ENCODE measurements at regions of chr1 and their contacts with region 1.

Region 1: GRCh38 chr1:228275739-228276421 is 68.0 kb downstream of the OBSCN start:
- DNase-seq: peak; percentile 75
- H3K4me3 ChIP-seq: peak overlapping the region; percentile 40 to 62 (median 49)
- H3K27ac ChIP-seq: peak overlapping the region; percentile 21
- H3K4me1 ChIP-seq: peaks cover 7% of the 10 kb centered on the region
- H3K27me3 ChIP-seq: no peaks in the 10 kb centered on the region
- CTCF ChIP-seq: no peak
- POLR2A ChIP-seq: no peak

Region 2: DNA sequence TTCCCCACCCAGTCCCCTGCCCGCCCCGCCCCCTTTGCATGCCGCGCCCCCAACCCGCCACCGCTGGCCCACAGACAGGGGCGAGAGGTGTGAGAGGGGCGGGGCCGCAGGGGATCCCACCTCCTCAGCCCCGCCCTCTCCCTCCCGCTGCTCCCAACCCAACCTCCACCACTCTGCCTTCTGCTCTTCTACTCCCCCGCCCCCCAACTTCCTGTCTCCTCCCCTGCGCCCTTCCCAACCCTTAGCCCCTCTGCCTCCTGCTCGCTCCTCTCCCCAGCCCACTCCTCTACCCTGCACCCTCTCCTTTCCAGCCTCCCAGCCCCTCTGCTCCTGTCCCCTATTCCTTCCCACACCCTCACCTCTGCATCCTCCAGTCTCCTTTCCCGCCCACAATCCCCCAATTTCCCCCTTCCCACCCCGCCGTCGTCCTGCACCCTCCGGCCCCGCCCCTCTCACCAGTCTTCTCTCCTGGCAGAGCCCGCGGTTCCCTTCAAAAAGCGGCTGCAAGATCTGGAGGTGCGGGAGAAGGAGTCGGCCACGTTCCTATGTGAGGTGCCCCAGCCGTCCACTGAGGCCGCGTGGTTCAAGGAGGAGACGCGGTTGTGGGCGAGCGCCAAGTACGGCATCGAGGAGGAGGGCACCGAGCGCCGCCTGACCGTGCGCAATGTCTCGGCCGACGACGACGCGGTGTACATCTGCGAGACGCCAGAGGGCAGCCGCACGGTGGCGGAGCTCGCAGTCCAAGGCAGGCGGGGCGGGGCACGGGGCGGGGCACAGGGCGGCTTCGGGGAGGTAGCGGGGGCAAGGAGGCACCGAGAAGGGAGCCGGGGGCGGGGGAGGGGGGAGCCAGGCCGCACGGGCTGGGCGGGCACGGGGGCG is 62.7 kb before region 1 on chr1:
- CTCF ChIA-PET with region 1: interaction called, 5 read pairs
- POLR2A ChIA-PET with region 1: no interaction called
- dilution Hi-C with region 1: no loop called
- intact Hi-C with region 1: loop called (anchors 2 kb)
- DNase-seq: peak; percentile 63
- H3K4me3 ChIP-seq: peak overlapping the region in 1 of 3 experiments; percentile 26
- H3K27ac ChIP-seq: no peak overlapping the region
- H3K4me1 ChIP-seq: no peaks in the 10 kb centered on the region
- H3K27me3 ChIP-seq: peaks cover 4 to 16% of the 10 kb centered on the region in 2 experiments
- CTCF ChIP-seq: peak; percentile 33 to 73
- POLR2A ChIP-seq: no peak

Region 3: DNA sequence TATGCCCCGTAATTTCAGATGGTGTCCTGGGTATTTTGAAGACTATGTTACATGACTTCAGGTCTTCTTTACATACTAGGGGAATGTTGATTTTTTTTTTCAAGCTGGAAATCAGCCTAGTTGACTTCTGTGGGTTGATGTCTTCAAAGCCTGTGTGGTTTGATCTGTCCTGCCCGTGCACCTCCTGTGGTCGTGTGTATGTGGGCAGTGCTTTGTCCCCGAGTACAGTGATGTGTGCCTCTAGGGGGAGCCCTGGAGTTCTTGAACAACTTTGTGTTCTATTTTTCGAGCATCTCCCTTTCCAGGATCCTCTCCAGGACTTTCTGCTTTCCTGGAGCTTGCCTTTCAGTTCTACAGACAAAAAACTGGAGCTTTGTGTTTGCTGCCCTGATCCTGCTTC is 39.1 kb before region 1 on chr1:
- CTCF ChIA-PET with region 1: no interaction called
- POLR2A ChIA-PET with region 1: no interaction called
- dilution Hi-C with region 1: no loop called
- intact Hi-C with region 1: loop called (anchors 5 kb)
- DNase-seq: peak; percentile 62
- H3K4me3 ChIP-seq: no peak overlapping the region
- H3K27ac ChIP-seq: no peak overlapping the region
- H3K4me1 ChIP-seq: no peaks in the 10 kb centered on the region
- H3K27me3 ChIP-seq: peaks cover 2 to 9% of the 10 kb centered on the region in 2 experiments
- CTCF ChIP-seq: peak; percentile 84
- POLR2A ChIP-seq: no peak

Region 4: DNA sequence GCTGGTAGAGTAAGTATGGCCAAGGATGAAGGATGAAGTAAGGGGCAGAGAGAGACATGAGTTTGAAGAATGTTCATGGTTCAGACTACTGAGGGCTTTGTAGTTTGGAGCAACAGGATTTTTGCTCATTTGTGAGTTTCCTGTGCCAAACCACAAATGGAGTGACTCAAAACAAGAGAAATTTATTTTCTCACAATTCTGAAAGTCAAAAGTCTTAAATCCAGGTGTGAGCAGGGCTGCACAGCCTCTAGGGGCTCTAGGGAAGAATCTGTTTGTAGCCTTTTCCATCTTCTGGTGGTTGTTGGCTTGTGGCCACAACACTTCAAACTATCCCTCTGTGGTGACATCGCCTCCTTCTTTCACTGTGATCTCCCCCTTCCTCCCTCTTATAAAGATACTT is 518.3 kb after region 1 on chr1:
- CTCF ChIA-PET with region 1: no interaction called
- POLR2A ChIA-PET with region 1: no interaction called
- dilution Hi-C with region 1: no loop called
- intact Hi-C with region 1: no loop called
- DNase-seq: no peak
- H3K4me3 ChIP-seq: no peak overlapping the region
- H3K27ac ChIP-seq: no peak overlapping the region
- H3K4me1 ChIP-seq: no peaks in the 10 kb centered on the region
- H3K27me3 ChIP-seq: no peaks in the 10 kb centered on the region
- CTCF ChIP-seq: no peak
- POLR2A ChIP-seq: no peak